CD8-positive, alpha-beta T cell (primary cell): ENCODE measurements at regions of chr2 and their contacts with region 1.

Region 1: DNA sequence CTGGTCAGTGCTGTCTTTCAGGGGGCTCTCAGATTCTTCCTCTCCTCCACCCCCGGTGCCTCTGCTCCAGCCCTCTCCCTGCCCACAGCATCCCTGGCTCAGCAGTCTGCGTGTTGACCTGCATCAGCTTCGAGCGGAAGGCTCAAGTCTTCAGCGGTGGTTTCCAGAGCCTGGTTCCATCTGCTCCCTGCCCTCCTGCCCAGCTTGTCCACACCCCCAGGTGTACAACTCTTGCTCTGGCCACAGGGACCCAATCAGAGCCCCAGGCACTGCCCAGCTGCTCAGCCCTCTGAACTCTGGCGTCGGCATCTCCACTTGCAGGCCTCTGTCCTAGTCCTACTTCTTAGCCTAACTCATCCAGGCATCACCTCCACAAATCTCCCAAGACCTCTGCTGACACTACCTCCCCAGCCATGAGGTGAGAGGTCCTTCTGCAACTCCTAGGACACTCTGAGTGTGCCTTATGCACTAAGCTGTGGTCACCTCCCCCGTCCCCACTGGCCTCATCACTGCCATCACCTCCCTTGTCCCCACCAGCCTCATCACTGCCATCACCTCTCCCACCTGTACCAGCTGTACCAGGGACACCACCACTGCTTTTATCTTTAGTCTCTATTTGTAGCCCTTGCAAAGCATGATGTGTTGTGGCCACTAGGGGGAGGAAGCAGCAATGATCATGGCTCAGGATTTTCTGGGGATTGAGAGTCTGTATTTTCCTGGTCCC is 60.9 kb downstream of the EDAR start:
- DNase-seq: peak in 8 of 9 experiments; percentile 11 to 69 (median 48)
- ATAC-seq: peak; percentile 49
- H3K4me3 ChIP-seq: no peak overlapping the region
- H3K4me3 Mint-ChIP-seq: no peak overlapping the region
- H3K27ac ChIP-seq: no peak overlapping the region
- H3K27ac Mint-ChIP-seq: no peak overlapping the region
- H3K4me1 ChIP-seq: peaks cover 5% of the 10 kb centered on the region
- H3K4me1 Mint-ChIP-seq: peaks cover 9% of the 10 kb centered on the region
- H3K27me3 ChIP-seq: no peaks in the 10 kb centered on the region
- H3K27me3 Mint-ChIP-seq: no peaks in the 10 kb centered on the region
- CTCF ChIP-seq: peak; percentile 97

Region 2: GRCh38 chr2:108910541-108911396 is 17.3 kb before region 1 on chr2:
- CTCF ChIA-PET with region 1: interaction called, 24 read pairs
- POLR2A ChIA-PET with region 1: no interaction called
- intact Hi-C with region 1: no loop called
- DNase-seq: peak in 1 of 9 experiments; percentile 25
- ATAC-seq: no peak
- H3K4me3 ChIP-seq: no peak overlapping the region
- H3K4me3 Mint-ChIP-seq: no peak overlapping the region
- H3K27ac ChIP-seq: no peak overlapping the region
- H3K27ac Mint-ChIP-seq: no peak overlapping the region
- H3K4me1 ChIP-seq: peaks cover 8% of the 10 kb centered on the region
- H3K4me1 Mint-ChIP-seq: peaks cover 11% of the 10 kb centered on the region
- H3K27me3 ChIP-seq: no peaks in the 10 kb centered on the region
- H3K27me3 Mint-ChIP-seq: no peaks in the 10 kb centered on the region
- CTCF ChIP-seq: no peak

Region 3: GRCh38 chr2:108938077-108938710 is 10.1 kb after region 1 on chr2:
- CTCF ChIA-PET with region 1: interaction called, 16 read pairs
- POLR2A ChIA-PET with region 1: no interaction called
- intact Hi-C with region 1: no loop called
- DNase-seq: peak in 1 of 9 experiments; percentile 14
- ATAC-seq: peak; percentile 23
- H3K4me3 ChIP-seq: no peak overlapping the region
- H3K4me3 Mint-ChIP-seq: peak overlapping the region; percentile 53
- H3K27ac ChIP-seq: no peak overlapping the region
- H3K27ac Mint-ChIP-seq: no peak overlapping the region
- H3K4me1 ChIP-seq: peaks cover 10% of the 10 kb centered on the region
- H3K4me1 Mint-ChIP-seq: peaks cover 28% of the 10 kb centered on the region
- H3K27me3 ChIP-seq: no peaks in the 10 kb centered on the region
- H3K27me3 Mint-ChIP-seq: no peaks in the 10 kb centered on the region
- CTCF ChIP-seq: no peak

Region 4: DNA sequence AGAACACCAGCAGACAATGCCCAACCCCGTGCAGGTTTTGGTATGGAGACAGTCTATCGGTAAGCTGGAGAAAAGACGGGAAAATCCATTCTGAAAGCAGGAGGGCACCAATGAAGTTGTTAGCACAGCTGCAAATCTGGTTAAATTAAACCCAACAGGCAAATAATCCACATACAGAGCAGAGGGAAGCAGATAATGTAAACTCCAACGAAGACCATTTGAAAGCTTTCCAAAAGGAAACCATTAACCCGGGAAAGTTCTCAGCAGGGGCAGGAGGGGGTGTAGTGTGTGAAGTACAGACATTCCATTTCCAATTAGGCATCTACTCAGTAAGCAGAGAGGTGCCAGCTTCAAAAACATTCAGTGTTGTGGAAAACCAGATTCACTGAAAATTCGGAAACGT is 50.6 kb after region 1 on chr2:
- CTCF ChIA-PET with region 1: interaction called, 18 read pairs
- POLR2A ChIA-PET with region 1: no interaction called
- intact Hi-C with region 1: no loop called
- DNase-seq: no peak
- ATAC-seq: no peak
- H3K4me3 ChIP-seq: no peak overlapping the region
- H3K4me3 Mint-ChIP-seq: no peak overlapping the region
- H3K27ac ChIP-seq: no peak overlapping the region
- H3K27ac Mint-ChIP-seq: no peak overlapping the region
- H3K4me1 ChIP-seq: peaks cover 30% of the 10 kb centered on the region
- H3K4me1 Mint-ChIP-seq: peaks cover 62% of the 10 kb centered on the region
- H3K27me3 ChIP-seq: no peaks in the 10 kb centered on the region
- H3K27me3 Mint-ChIP-seq: no peaks in the 10 kb centered on the region
- CTCF ChIP-seq: no peak

Region 5: DNA sequence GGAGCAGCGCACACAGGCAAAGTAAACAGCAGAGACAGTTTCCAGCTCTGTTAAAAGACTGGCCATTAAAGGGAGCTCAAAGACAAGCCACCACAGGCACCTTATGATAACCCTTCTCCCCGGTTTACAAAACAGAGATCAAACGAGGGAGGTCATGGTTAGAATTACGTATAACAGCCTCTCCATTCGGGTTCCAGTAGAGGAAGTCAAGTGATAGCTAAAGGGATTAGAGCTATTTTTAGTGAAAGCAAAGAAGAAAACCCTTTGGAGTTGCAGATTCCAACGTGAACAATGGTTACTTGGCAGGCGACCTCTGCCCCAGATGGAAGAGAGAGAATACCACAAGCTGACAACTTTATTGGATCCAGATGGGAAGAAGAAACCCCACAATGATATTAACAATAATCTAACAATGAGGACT is 92.1 kb after region 1 on chr2:
- CTCF ChIA-PET with region 1: interaction called, 10 read pairs
- POLR2A ChIA-PET with region 1: no interaction called
- intact Hi-C with region 1: no loop called
- DNase-seq: peak in 2 of 9 experiments; percentile 24 to 48
- ATAC-seq: peak; percentile 92
- H3K4me3 ChIP-seq: no peak overlapping the region
- H3K4me3 Mint-ChIP-seq: peak overlapping the region; percentile 9
- H3K27ac ChIP-seq: no peak overlapping the region
- H3K27ac Mint-ChIP-seq: peak overlapping the region; percentile 23
- H3K4me1 ChIP-seq: peaks cover 16% of the 10 kb centered on the region
- H3K4me1 Mint-ChIP-seq: peaks cover 36% of the 10 kb centered on the region
- H3K27me3 ChIP-seq: no peaks in the 10 kb centered on the region
- H3K27me3 Mint-ChIP-seq: no peaks in the 10 kb centered on the region
- CTCF ChIP-seq: no peak

Region 6: DNA sequence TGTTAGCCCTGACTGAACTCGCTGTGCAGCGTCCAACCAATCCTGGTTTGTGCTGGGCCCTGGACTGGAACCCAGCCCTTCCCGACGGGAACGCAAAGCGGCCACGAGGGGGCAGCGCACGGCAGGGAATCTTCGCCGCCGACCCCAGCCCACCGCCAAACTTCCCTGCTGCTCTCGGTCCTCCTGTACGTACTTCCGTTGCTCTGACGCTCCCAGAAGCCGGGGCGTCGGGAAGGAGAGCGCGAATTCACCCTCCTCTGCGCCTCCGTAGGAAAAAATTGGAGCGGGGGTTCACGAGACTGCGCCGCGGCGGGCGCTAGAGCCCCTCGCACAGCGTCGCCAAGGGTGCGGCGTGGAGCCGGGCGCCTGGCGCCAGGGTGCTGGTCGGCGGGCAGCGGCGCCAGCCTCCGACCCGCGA is 200.0 kb after region 1 on chr2:
- CTCF ChIA-PET with region 1: interaction called, 14 read pairs
- POLR2A ChIA-PET with region 1: no interaction called
- intact Hi-C with region 1: loop called in 1 of 2 experiments (anchors 1 kb)
- DNase-seq: peak; percentile 38 to 83 (median 63)
- ATAC-seq: peak; percentile 54
- H3K4me3 ChIP-seq: peak overlapping the region; percentile 57 to 89
- H3K4me3 Mint-ChIP-seq: peak overlapping the region; percentile 84
- H3K27ac ChIP-seq: peak overlapping the region in 1 of 2 experiments; percentile 47
- H3K27ac Mint-ChIP-seq: peak overlapping the region; percentile 66
- H3K4me1 ChIP-seq: peaks cover 19% of the 10 kb centered on the region
- H3K4me1 Mint-ChIP-seq: peaks cover 48% of the 10 kb centered on the region
- H3K27me3 ChIP-seq: peaks cover 0 to 16% of the 10 kb centered on the region in 2 experiments
- H3K27me3 Mint-ChIP-seq: peaks cover 9% of the 10 kb centered on the region
- CTCF ChIP-seq: peak; percentile 86

Region 7: GRCh38 chr2:109497463-109497862 is 569.4 kb after region 1 on chr2:
- CTCF ChIA-PET with region 1: no interaction called
- POLR2A ChIA-PET with region 1: no interaction called
- intact Hi-C with region 1: no loop called
- DNase-seq: no peak
- ATAC-seq: no peak
- H3K4me3 ChIP-seq: no peak overlapping the region
- H3K4me3 Mint-ChIP-seq: no peak overlapping the region
- H3K27ac ChIP-seq: no peak overlapping the region
- H3K27ac Mint-ChIP-seq: no peak overlapping the region
- H3K4me1 ChIP-seq: no peaks in the 10 kb centered on the region
- H3K4me1 Mint-ChIP-seq: no peaks in the 10 kb centered on the region
- H3K27me3 ChIP-seq: no peaks in the 10 kb centered on the region
- H3K27me3 Mint-ChIP-seq: no peaks in the 10 kb centered on the region
- CTCF ChIP-seq: no peak

Region 8: DNA sequence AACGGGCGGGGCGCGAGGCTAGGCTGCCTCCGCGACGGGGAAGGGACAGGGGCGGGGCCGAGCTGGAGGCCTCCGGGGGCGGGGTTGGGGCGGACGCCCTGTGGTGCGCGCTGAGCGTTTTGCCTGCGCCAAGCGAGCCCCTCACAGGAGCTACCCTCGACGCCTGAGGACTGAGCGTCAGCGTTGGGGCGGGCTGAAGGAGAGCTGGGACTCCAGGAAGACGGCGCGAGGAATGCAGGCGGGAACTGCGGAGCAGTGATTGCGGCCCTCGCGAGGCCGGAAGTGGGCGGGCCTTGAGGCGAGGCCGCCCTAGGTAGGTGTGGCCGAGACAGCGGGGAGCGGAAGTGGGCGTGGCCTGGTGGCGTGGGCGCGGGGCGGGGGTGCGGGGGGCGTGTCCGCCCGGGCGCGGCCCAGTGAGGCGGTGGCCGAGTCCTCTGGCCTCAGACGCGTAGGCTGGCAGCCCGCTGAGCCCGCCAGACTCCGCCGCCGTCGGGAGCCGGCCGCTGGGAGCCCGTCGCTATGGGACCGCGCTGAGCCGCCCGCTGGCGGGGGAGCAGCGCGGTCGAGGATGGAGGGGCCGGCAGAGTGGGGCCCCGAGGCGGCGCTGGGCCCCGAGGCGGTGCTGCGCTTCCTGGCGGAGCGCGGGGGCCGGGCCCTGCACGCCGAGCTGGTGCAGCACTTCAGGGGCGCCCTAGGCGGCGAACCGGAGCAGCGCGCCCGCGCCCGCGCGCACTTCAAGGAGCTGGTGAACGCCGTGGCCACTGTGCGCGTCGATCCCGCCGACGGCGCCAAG is 686.0 kb after region 1 on chr2 and contains the starts of genes SEPTIN10 and SOWAHC:
- CTCF ChIA-PET with region 1: no interaction called
- POLR2A ChIA-PET with region 1: no interaction called
- intact Hi-C with region 1: no loop called
- DNase-seq: peak; percentile 41 to 83 (median 73)
- ATAC-seq: peak; percentile 90
- H3K4me3 ChIP-seq: peak within 1 kb of the TSS; percentile 40 to 51
- H3K4me3 Mint-ChIP-seq: peak within 1 kb of the TSS; percentile 84
- H3K27ac ChIP-seq: no peak within 1 kb of the TSS
- H3K27ac Mint-ChIP-seq: no peak within 1 kb of the TSS
- H3K4me1 ChIP-seq: peaks cover 3% of the 10 kb centered on the region
- H3K4me1 Mint-ChIP-seq: peaks cover 18% of the 10 kb centered on the region
- H3K27me3 ChIP-seq: peaks cover 26 to 34% of the 10 kb centered on the region in 2 experiments
- H3K27me3 Mint-ChIP-seq: peaks cover 59% of the 10 kb centered on the region
- CTCF ChIP-seq: no peak
- total RNA-seq, gene SEPTIN10: 0.39 to 1.4 TPM
- total RNA-seq, gene SOWAHC: 0.24 to 0.28 TPM